ENCODE measurements at regions of chr17 and their contacts with region 1.

Region 1: GRCh38 chr17:80899402-80900268 is 92.0 kb upstream of the CHMP6 start:
- DNase-seq: peak; percentile 74 to 86 (median 81)
- ATAC-seq: peak; percentile 96
- H3K4me3 ChIP-seq: no peak overlapping the region
- H3K27ac ChIP-seq: no peak overlapping the region
- H3K4me1 ChIP-seq: peaks cover 0 to 10% of the 10 kb centered on the region in 2 experiments; a peak in 1 of 5 replicates
- H3K27me3 ChIP-seq: no peaks in the 10 kb centered on the region
- CTCF ChIP-seq: peak; percentile 81 to 93 (median 92)
- EP300 ChIP-seq: no peak
- POLR2A ChIP-seq: no peak
- RAD21 ChIP-seq: peak; percentile 69 to 86

Region 2: DNA sequence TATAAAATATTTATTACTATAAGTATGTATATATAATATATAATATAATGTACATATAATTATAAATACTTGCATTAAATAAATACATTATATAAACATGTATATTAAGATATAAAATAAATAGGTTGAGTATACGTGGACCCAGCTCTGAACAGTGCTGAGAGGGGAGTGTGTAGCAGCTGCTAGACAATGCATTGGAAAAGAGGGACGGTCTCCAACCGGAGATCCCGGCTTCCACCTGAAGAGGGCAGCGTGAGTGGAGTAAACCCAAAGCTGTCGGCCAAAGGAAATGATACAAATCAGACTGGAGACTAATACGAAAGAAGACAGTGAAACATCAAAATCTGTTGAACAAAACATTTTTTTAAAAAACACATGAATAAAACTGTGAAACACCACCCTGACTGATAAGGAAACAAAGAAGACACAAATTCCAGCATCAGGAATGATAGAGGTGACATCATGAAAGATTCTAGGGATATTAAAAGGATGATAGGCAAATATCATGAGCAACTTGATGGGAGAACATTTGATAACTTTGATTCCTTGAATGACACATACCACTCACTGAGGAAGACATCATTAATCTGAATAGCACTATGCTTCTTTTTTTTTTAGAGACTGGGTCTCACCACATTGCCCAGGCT is 33.4 kb before region 1 on chr17:
- CTCF ChIA-PET with region 1: interaction called, 3 read pairs
- POLR2A ChIA-PET with region 1: no interaction called
- in situ Hi-C with region 1: no loop called
- intact Hi-C with region 1: loop called (anchors 1 kb)
- DNase-seq: peak; percentile 67 to 72 (median 68)
- ATAC-seq: peak; percentile 98
- H3K4me3 ChIP-seq: no peak overlapping the region
- H3K27ac ChIP-seq: no peak overlapping the region
- H3K4me1 ChIP-seq: peaks cover 0 to 5% of the 10 kb centered on the region in 2 experiments; a peak in 1 of 5 replicates
- H3K27me3 ChIP-seq: no peaks in the 10 kb centered on the region
- CTCF ChIP-seq: peak; percentile 66 to 75 (median 72)
- EP300 ChIP-seq: no peak
- POLR2A ChIP-seq: no peak
- RAD21 ChIP-seq: peak; percentile 27 to 58

Measured in K562 (cell line).